ENCODE measurements at regions of chr5 and their contacts with region 1.

Region 1: DNA sequence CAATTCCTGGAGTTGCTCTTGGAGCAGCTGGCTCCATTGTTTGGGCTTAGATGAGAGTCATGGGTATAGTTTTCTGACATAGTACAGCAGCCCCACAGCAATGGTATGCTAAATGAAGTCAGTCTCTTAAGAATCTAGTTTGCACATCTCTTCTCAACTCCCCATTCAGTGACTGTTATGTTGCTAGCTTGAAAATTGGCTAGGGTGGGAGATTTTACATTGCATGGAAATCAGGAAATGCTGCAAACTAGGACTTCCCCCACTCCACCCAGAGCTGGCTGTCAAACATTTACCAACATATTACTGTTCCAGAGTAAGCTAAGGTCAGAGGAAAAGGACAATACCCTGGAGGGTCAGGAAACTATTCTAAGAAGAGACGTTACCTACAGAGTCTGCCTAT is 17.6 kb upstream of the FCHO2 start:
- DNase-seq: no peak
- ATAC-seq: peak; percentile 91
- H3K4me3 ChIP-seq: no peak overlapping the region
- H3K27ac ChIP-seq: no peak overlapping the region
- H3K4me1 ChIP-seq: peaks cover 32% of the 10 kb centered on the region
- H3K27me3 ChIP-seq: no peaks in the 10 kb centered on the region; a peak in 1 of 5 replicates
- CTCF ChIP-seq: no peak
- EP300 ChIP-seq: no peak
- POLR2A ChIP-seq: no peak
- RAD21 ChIP-seq: no peak

Region 2: GRCh38 chr5:72749362-72749997 is 188.7 kb before region 1 on chr5:
- CTCF ChIA-PET with region 1: no interaction called
- POLR2A ChIA-PET with region 1: no interaction called
- in situ Hi-C with region 1: no loop called
- intact Hi-C with region 1: loop called (anchors 5 kb)
- DNase-seq: no peak
- ATAC-seq: no peak
- H3K4me3 ChIP-seq: no peak overlapping the region
- H3K27ac ChIP-seq: no peak overlapping the region
- H3K4me1 ChIP-seq: no peaks in the 10 kb centered on the region
- H3K27me3 ChIP-seq: 0 out of 5 replicates have a peak, but pooled peaks cover 0 to 2% of the 10 kb centered on the region in 2 experiments
- CTCF ChIP-seq: no peak
- EP300 ChIP-seq: no peak
- POLR2A ChIP-seq: no peak
- RAD21 ChIP-seq: no peak